ENCODE measurements at regions of chr1 and their contacts with region 1.

Region 1: DNA sequence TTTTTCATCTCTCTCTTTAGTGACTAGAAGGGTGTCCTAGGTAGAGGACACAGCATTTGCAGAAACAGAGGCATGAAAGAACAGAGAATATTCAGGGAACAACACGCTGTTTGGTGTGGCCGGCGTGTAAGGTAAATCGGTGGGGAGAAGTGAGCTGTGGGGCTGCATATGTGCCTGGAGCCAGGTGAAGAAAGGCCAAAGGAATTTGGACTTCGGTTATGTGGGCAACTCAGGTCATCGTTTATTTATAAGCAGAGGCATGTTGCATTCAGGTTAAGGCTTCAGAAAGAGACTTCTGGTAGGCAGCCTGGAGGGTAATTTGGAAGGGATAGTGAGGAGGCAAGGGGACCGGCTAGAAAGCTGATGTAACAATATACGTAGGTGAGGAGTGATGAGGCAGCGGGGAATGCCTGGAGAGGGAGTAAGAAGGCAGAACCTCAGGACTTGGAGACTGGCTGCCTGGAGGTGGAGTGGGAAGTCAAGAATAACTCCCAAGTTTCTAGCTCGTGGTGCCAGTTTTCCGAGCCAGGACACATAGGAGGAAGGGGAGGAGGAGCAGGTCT is 64.1 kb upstream of the ACOT11 start:
- DNase-seq: no peak
- ATAC-seq: no peak
- H3K4me3 ChIP-seq: no peak overlapping the region
- H3K27ac ChIP-seq: no peak overlapping the region
- H3K4me1 ChIP-seq: peaks cover 2% of the 10 kb centered on the region
- H3K27me3 ChIP-seq: no peaks in the 10 kb centered on the region

Region 2: DNA sequence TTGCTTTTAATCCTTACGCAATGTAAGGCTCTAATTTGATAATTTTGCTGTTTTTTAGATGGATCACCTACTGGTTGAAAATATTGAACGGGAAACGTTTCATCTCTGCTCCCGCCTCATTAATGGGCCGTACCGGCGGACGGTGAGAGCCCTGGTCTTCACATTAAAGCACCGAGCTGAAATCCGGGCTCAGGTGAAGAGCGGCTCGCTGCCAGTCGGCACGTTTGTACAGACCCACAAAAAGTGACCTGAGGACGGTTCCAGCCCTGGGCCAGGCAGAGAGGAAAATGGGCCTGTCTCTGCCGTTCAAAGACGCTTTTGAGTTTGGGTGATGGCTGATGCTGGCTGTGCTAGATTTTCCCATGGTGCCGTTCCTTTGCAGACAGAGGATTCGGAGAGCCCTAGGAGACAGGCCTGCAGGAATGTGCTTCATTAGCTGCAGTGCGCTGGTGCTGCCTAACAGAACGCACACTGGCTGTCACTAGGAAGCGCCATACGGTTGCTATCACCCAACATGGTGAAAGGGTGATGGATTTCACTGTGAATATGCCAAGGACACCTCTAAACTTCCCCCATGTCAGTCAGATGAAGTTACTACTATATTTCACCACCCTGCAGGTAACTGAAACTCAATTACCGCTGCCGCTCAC is 387.6 kb before region 1 on chr1:
- intact Hi-C with region 1: no loop called
- DNase-seq: no peak
- ATAC-seq: no peak
- H3K4me3 ChIP-seq: no peak overlapping the region
- H3K27ac ChIP-seq: no peak overlapping the region
- H3K4me1 ChIP-seq: peaks cover 2% of the 10 kb centered on the region
- H3K27me3 ChIP-seq: no peaks in the 10 kb centered on the region

Region 3: DNA sequence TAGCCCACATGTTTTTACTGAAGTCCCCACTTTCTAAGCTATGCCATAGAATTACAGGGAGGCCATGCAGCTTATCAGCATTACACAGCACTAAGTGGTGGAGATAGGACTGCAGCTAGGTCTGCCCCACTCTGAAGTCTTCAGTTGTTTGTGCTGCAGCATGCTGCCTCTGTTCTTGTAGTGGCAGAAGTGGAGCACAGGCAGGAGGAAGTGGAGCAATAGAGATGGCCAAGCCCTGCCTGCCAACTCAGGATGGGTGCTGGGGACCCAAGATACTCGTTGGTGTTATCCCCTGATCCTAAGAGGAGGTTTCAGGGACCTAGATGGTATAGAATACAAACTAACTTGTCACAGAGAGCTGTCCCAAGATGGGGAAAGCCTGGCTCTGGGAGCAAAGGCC is 271.1 kb before region 1 on chr1:
- intact Hi-C with region 1: no loop called
- DNase-seq: no peak
- ATAC-seq: no peak
- H3K4me3 ChIP-seq: no peak overlapping the region
- H3K27ac ChIP-seq: no peak overlapping the region
- H3K4me1 ChIP-seq: no peaks in the 10 kb centered on the region
- H3K27me3 ChIP-seq: no peaks in the 10 kb centered on the region

Region 4: DNA sequence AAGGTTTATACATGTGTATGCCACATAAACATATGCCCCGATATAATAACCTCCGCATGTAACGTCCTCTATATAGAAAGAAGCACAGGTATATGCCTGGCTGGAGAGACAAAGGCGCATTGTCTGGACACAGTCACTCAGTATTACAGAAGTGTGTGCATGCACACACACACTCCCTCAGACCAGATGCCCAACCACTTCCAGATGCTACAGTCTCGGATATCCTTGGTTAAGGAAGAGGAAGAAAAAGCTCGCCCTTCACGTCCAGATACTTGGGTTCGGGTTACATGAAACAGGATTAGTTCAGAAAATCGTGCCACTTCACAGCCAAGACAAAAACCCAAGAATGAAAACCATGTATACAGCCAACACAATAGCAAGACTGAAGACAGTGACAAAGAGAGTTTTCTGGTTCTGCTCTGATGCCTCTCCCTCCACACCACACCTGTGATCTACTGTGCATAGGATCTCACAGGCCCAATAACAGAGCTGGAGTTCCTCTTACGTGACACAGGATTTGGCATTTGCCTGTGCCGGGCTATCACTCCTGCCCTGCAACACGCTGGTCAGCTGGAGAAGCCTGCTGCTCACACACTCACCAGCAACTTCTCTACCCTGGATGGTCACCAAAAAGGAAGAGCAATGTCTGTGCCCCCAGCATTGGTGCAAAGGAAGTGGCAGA is 152.7 kb before region 1 on chr1:
- intact Hi-C with region 1: no loop called
- DNase-seq: no peak
- ATAC-seq: no peak
- H3K4me3 ChIP-seq: no peak overlapping the region
- H3K27ac ChIP-seq: no peak overlapping the region
- H3K4me1 ChIP-seq: peaks cover 49% of the 10 kb centered on the region
- H3K27me3 ChIP-seq: no peaks in the 10 kb centered on the region

Region 5: DNA sequence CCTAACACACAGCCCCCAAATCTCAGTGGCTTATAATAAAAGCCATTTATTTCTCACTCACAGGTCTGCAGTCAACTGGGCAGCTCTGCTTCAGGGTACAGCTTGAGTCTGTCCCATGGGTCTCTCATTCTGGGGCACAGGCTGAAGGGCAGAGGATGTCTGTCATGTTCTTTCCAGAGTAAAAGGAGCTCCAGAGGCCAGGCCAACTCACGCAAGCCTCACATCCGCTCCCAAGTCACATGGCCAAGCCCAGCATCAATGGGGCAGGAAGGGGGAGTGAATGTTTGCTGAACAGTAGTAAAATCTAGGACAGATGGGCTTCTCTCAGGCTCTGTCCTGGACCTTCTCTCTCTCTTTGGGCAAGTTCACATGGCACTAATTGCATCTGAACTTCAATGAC is 70.7 kb before region 1 on chr1:
- intact Hi-C with region 1: loop called in 2 of 4 experiments (anchors 2 kb)
- DNase-seq: peak; percentile 58 to 82 (median 78)
- ATAC-seq: peak; percentile 71 to 89
- H3K4me3 ChIP-seq: no peak overlapping the region
- H3K27ac ChIP-seq: no peak overlapping the region
- H3K4me1 ChIP-seq: no peaks in the 10 kb centered on the region
- H3K27me3 ChIP-seq: no peaks in the 10 kb centered on the region

Measured in right cardiac atrium (tissue), 5 donors.